MCF 10A (cell line): ENCODE measurements at regions of chr5 and their contacts with region 1.

Region 1: DNA sequence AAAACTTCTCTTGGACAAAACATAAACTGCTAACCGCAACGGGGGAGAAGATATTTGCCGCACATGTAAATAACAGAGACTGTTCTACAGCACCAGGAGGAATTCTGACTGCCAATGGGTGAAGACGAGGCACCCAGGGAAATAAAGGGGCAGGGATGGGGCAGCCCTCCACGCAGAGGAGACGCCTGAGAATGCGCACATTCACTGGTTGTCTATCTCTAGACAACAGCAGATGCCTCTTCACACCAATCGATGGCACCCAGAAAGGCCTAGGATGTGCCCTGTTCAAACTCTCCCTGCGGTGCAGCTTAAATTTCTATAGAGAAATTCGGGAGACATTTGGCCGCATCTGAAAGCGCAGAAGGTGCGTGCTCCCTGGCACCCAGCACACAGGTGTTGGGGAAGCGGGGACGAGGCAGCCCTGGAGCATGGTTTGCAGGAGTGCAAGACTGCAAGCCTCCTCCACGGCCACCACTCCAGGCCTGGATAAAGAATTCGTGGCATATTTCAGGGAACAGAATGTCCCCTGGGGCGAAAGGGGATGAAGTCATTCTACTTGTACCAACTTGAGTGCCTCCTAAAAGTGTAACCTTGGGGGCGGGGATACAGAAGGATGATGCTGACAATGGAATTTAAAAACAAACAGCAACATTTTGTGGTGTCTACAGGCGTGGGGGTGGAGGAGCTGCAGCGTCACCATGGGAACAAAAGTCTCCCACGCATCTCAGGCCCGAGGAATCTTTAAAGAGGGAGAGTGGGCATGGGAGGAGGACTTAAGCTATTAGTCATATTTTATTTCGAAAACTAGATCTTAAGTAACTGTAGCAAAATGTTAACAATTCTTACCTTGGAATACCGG is 6.3 kb upstream of the IRX2 start:
- DNase-seq: peak; percentile 100
- H3K4me3 Mint-ChIP-seq: no peak overlapping the region
- H3K27ac Mint-ChIP-seq: peak overlapping the region; percentile 86
- H3K4me1 Mint-ChIP-seq: peaks cover 37% of the 10 kb centered on the region
- H3K27me3 Mint-ChIP-seq: no peaks in the 10 kb centered on the region
- CTCF ChIP-seq: no peak

Region 2: GRCh38 chr5:2727550-2727949 is 30.2 kb before region 1 on chr5:
- CTCF ChIA-PET with region 1: no interaction called
- POLR2A ChIA-PET with region 1: no interaction called
- intact Hi-C with region 1: no loop called
- DNase-seq: no peak
- H3K4me3 Mint-ChIP-seq: no peak overlapping the region
- H3K27ac Mint-ChIP-seq: no peak overlapping the region
- H3K4me1 Mint-ChIP-seq: no peaks in the 10 kb centered on the region
- H3K27me3 Mint-ChIP-seq: no peaks in the 10 kb centered on the region
- CTCF ChIP-seq: no peak

Region 3: GRCh38 chr5:2780394-2781171 is 22.8 kb after region 1 on chr5:
- CTCF ChIA-PET with region 1: interaction called, 4 read pairs
- POLR2A ChIA-PET with region 1: interaction called, 22 read pairs
- intact Hi-C with region 1: no loop called
- DNase-seq: peak; percentile 84
- H3K4me3 Mint-ChIP-seq: no peak overlapping the region
- H3K27ac Mint-ChIP-seq: no peak overlapping the region
- H3K4me1 Mint-ChIP-seq: peaks cover 10% of the 10 kb centered on the region
- H3K27me3 Mint-ChIP-seq: no peaks in the 10 kb centered on the region
- CTCF ChIP-seq: no peak

Region 4: DNA sequence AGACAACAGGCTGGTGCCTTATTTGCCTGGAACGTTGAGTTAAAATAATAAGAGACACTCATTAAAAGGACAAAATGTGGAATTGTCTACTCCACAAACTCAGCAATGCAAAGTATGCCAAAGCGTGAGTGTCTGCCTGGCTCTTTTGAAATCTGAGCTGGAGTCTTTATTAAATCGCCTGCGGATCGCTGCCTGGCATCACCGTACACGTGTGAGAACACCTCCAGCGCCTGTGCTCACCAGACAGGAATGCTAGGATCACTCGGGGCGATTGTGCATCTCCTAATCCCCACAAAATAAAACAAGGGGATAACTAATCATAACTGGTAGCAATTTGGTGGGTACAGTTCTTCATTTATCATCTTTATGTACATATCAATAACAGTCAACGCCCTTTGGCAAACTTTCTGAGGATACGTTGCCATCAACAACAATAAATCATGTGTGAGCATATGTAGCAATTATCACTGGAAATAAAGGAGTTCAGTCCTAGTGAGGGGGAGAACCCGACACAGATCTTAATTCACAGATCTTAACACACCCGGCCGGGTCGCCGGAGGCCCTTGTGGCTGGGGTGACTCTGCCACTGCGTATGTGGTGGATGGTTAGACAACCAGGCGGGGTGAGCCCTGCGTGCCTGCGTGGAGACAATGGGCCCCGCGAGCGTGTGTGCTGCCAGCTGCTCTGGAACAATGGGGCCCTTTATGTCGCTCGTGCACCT is 552.9 kb after region 1 on chr5:
- CTCF ChIA-PET with region 1: no interaction called
- POLR2A ChIA-PET with region 1: interaction called, 27 read pairs
- intact Hi-C with region 1: loop called (anchors 2 kb)
- DNase-seq: peak; percentile 93
- H3K4me3 Mint-ChIP-seq: peak overlapping the region; percentile 65
- H3K27ac Mint-ChIP-seq: peak overlapping the region; percentile 97
- H3K4me1 Mint-ChIP-seq: peaks cover 24% of the 10 kb centered on the region
- H3K27me3 Mint-ChIP-seq: no peaks in the 10 kb centered on the region
- CTCF ChIP-seq: no peak